T-cell (primary cell): ENCODE measurements at regions of chrX and their contacts with region 1.

Region 1: GRCh38 chrX:145803508-145803907 is 14.1 kb upstream of the SLITRK2 start:
- DNase-seq: no peak
- ATAC-seq: no peak
- H3K4me3 ChIP-seq: no peak overlapping the region
- H3K4me3 Mint-ChIP-seq: no peak overlapping the region
- H3K27ac ChIP-seq: no peak overlapping the region
- H3K27ac Mint-ChIP-seq: no peak overlapping the region
- H3K4me1 ChIP-seq: no peaks in the 10 kb centered on the region
- H3K4me1 Mint-ChIP-seq: no peaks in the 10 kb centered on the region
- H3K27me3 ChIP-seq: no peaks in the 10 kb centered on the region
- H3K27me3 Mint-ChIP-seq: peaks cover 0 to 5% of the 10 kb centered on the region in 2 donors

Region 2: GRCh38 chrX:145825896-145826295 is 22.4 kb after region 1 on chrX:
- CTCF ChIA-PET with region 1: interaction called in 1 of 2 experiments, 10 read pairs
- POLR2A ChIA-PET with region 1: no interaction called
- DNase-seq: no peak
- ATAC-seq: no peak
- H3K4me3 ChIP-seq: no peak overlapping the region
- H3K4me3 Mint-ChIP-seq: no peak overlapping the region
- H3K27ac ChIP-seq: no peak overlapping the region
- H3K27ac Mint-ChIP-seq: no peak overlapping the region
- H3K4me1 ChIP-seq: no peaks in the 10 kb centered on the region
- H3K4me1 Mint-ChIP-seq: no peaks in the 10 kb centered on the region
- H3K27me3 ChIP-seq: peaks cover 0 to 12% of the 10 kb centered on the region in 2 experiments
- H3K27me3 Mint-ChIP-seq: peaks cover 12 to 21% of the 10 kb centered on the region in 2 donors

Region 3: GRCh38 chrX:145840531-145840930 is 37.0 kb after region 1 on chrX:
- CTCF ChIA-PET with region 1: no interaction called
- POLR2A ChIA-PET with region 1: no interaction called
- DNase-seq: no peak
- ATAC-seq: no peak
- H3K4me3 ChIP-seq: no peak overlapping the region
- H3K4me3 Mint-ChIP-seq: no peak overlapping the region
- H3K27ac ChIP-seq: no peak overlapping the region
- H3K27ac Mint-ChIP-seq: no peak overlapping the region
- H3K4me1 ChIP-seq: no peaks in the 10 kb centered on the region
- H3K4me1 Mint-ChIP-seq: no peaks in the 10 kb centered on the region
- H3K27me3 ChIP-seq: no peaks in the 10 kb centered on the region
- H3K27me3 Mint-ChIP-seq: no peaks in the 10 kb centered on the region

Region 4: GRCh38 chrX:145919400-145919799 is 115.9 kb after region 1 on chrX:
- CTCF ChIA-PET with region 1: no interaction called
- POLR2A ChIA-PET with region 1: no interaction called
- DNase-seq: no peak
- ATAC-seq: no peak
- H3K4me3 ChIP-seq: no peak overlapping the region
- H3K4me3 Mint-ChIP-seq: no peak overlapping the region
- H3K27ac ChIP-seq: no peak overlapping the region
- H3K27ac Mint-ChIP-seq: no peak overlapping the region
- H3K4me1 ChIP-seq: no peaks in the 10 kb centered on the region
- H3K4me1 Mint-ChIP-seq: no peaks in the 10 kb centered on the region
- H3K27me3 ChIP-seq: no peaks in the 10 kb centered on the region
- H3K27me3 Mint-ChIP-seq: no peaks in the 10 kb centered on the region